Aorta (tissue), 5 donors: ENCODE measurements at regions of chr15 and their contacts with region 1.

Region 1: DNA sequence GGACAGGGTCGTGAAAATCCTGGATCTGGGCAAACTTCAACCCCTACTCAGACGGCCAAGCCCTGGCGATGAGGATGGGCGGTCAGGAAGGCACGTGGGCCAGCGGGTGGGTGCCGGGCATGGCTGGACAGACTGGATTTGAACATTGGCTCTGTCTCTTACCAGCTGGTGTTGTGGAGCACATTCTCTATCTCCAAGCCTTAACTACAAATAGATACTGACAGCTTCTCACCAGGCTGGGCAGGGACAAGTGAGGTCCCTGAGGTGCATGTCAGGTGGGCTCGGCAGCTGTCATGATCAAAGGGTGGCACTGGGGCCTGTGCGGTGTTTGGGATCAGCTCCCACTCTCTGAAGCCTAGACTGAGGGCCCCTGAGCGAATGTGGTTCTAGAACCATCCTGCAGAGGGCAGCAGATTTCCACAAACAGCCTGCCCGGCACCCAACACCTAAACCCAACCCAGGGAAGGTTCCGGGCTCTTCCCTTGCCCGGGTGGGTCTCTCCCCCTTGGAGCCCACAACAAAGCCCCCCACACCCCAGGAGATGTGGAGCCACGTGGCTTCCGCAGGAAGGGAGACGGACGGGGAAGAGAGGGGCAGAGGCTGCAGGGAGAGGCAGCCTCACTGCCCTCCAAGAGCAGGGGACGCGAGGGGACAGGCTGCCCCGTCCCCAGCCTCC is 58.4 kb downstream of the RGMA start:
- DNase-seq: peak; percentile 82 to 86
- ATAC-seq: peak; percentile 84
- H3K4me3 ChIP-seq: no peak overlapping the region
- H3K27ac ChIP-seq: peak overlapping the region in 1 of 2 donors; percentile 23
- H3K4me1 ChIP-seq: peaks cover 0 to 2% of the 10 kb centered on the region in 2 donors
- H3K27me3 ChIP-seq: no peaks in the 10 kb centered on the region

Region 2: GRCh38 chr15:92693691-92694331 is 336.8 kb before region 1 on chr15:
- intact Hi-C with region 1: no loop called
- DNase-seq: no peak
- ATAC-seq: no peak
- H3K4me3 ChIP-seq: no peak overlapping the region
- H3K27ac ChIP-seq: no peak overlapping the region
- H3K4me1 ChIP-seq: no peaks in the 10 kb centered on the region
- H3K27me3 ChIP-seq: no peaks in the 10 kb centered on the region

Region 3: GRCh38 chr15:92797168-92797951 is 233.2 kb before region 1 on chr15:
- intact Hi-C with region 1: loop called in 1 of 2 experiments (anchors 5 kb)
- DNase-seq: no peak
- ATAC-seq: peak; percentile 82
- H3K4me3 ChIP-seq: no peak overlapping the region
- H3K27ac ChIP-seq: no peak overlapping the region
- H3K4me1 ChIP-seq: peaks cover 0 to 1% of the 10 kb centered on the region in 2 donors
- H3K27me3 ChIP-seq: no peaks in the 10 kb centered on the region

Region 4: GRCh38 chr15:92917606-92918407 is 112.8 kb before region 1 on chr15:
- intact Hi-C with region 1: no loop called
- DNase-seq: peak; percentile 96
- ATAC-seq: peak; percentile 88
- H3K4me3 ChIP-seq: no peak overlapping the region
- H3K27ac ChIP-seq: peak overlapping the region in 1 of 2 donors; percentile 58
- H3K4me1 ChIP-seq: peaks cover 9 to 29% of the 10 kb centered on the region in 2 donors
- H3K27me3 ChIP-seq: no peaks in the 10 kb centered on the region

Region 5: DNA sequence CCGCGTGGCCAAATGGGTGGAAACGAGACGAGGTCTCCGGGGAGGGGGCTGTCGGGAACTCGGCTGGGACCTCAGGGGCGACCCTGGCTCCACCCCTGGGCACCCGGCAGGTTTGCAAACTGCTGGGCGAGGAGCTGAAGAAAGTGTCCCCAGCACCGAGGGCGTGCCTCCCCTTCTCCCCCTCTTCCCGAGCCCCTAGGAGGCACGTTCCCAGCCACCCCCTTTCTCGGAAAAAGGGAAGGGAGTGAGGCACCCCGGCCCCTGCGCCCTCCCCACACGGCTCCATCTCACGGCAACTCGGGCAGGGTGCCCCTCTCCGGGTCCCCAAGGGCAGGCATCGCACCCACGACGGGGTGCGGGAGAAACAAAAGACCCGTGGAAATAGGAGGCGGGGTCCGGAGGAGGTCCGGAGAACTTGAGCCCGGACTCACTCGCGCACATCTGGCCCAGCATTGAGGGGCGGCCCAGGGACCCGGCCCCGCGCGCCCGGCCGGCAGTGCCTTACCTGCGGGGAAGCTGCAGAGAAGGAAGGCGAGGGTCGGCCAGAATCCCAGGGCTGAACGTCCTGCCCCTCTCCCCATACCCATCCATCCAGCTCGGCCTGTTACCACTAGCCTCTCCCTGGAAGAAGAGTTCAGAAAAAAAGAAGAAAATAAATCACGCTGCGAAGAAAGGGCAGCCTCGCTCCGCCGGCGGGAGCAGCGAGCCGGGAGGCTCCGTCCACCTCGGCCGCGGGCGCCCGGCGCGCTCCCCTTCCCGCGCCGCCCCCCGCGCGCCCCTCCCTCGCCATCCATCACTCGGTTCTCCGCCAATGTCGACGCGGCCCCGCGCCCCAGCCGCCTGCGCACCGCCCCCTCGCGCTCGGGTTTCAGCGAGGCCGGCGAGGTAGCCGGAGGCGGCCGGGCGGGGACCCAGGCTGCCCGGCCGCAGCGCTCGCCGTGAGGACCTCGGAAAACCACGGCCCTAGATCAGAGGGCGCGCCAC is 42.1 kb after region 1 on chr15:
- intact Hi-C with region 1: loop called (anchors 5 kb)
- DNase-seq: peak; percentile 87 to 96
- ATAC-seq: peak; percentile 89
- H3K4me3 ChIP-seq: peak overlapping the region; percentile 64 to 72
- H3K27ac ChIP-seq: peak overlapping the region in 1 of 2 donors; percentile 11
- H3K4me1 ChIP-seq: no peaks in the 10 kb centered on the region
- H3K27me3 ChIP-seq: no peaks in the 10 kb centered on the region

Region 6: DNA sequence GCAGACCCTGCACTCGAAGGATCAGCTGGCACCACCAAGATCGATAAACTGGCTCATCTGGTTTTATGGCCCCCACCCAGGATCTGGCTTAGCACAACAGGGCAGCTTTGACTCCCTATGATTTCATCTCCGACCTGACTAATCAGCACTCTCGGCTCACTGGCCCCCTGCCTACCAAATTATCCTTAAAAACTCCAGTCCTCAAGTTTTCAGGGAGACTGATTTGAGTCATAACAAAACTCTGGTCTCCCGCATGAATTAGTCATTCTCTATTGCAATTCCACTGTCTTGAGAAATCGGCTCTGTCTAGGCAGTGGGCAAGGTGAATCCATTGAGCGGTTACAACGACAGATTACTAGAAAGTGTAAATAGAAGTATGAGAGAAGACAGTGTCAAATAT is 580.4 kb after region 1 on chr15:
- intact Hi-C with region 1: loop called in 1 of 2 experiments (anchors 10 kb)
- DNase-seq: no peak
- ATAC-seq: no peak
- H3K4me3 ChIP-seq: no peak overlapping the region
- H3K27ac ChIP-seq: no peak overlapping the region
- H3K4me1 ChIP-seq: no peaks in the 10 kb centered on the region
- H3K27me3 ChIP-seq: no peaks in the 10 kb centered on the region

Region 7: GRCh38 chr15:93974804-93975481 is 944.4 kb after region 1 on chr15:
- intact Hi-C with region 1: loop called in 1 of 2 experiments (anchors 10 kb)
- DNase-seq: no peak
- ATAC-seq: no peak
- H3K4me3 ChIP-seq: no peak overlapping the region
- H3K27ac ChIP-seq: no peak overlapping the region
- H3K4me1 ChIP-seq: no peaks in the 10 kb centered on the region
- H3K27me3 ChIP-seq: no peaks in the 10 kb centered on the region

Region 8: DNA sequence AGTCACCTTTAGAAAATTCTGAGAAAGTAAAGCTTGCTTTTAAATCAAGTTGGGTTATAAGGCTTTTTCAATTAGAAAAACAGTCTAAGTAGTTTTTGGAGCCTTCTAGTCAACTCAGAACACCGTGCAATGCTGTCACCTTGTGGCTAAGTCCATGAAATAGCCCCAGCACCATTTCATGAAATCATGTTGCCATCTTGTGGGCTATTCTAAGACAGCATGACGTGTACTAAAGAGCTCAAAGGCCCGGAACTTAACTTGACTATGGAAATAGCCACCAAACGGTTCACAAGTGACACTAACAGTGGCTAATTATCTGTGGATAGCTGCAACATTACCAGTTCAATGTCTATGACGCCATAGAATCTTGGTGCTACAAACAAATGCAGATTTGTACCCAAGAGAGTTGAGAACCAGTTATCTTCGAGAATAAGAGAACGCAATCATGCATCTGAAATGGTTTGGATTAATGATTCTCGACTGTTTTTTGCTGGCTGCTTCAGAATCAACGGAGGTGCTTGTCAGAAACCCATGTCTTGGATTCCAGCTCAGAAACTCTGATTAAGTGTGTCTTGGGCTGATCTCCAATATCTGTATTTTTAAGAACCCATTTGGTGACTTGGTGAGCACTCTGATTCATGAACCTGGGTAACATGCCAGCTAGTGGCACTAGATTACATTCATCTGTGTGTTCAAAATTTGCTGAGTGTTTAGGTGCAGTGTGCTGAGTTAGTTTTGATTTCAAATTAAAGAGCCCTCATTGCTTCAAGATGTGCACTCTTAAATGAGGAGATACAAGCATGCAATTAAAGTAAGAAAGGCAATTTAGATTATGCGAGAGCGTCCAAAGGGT is 1089.6 kb after region 1 on chr15:
- intact Hi-C with region 1: loop called (anchors 10 kb)
- DNase-seq: peak in 1 of 2 donors; percentile 65
- ATAC-seq: peak; percentile 94
- H3K4me3 ChIP-seq: no peak overlapping the region
- H3K27ac ChIP-seq: no peak overlapping the region
- H3K4me1 ChIP-seq: peaks cover 0 to 3% of the 10 kb centered on the region in 2 donors
- H3K27me3 ChIP-seq: no peaks in the 10 kb centered on the region